ENCODE measurements at regions of chr6 and their contacts with region 1.

Region 1: GRCh38 chr6:135145063-135145800 is 35.9 kb upstream of the MYB start:
- DNase-seq: peak; percentile 24
- H3K4me3 ChIP-seq: no peak overlapping the region
- H3K27ac ChIP-seq: no peak overlapping the region
- H3K4me1 ChIP-seq: peaks cover 10% of the 10 kb centered on the region
- H3K27me3 ChIP-seq: no peaks in the 10 kb centered on the region
- CTCF ChIP-seq: peak; percentile 53 to 74

Region 2: GRCh38 chr6:135088818-135089809 is 56.1 kb before region 1 on chr6:
- CTCF ChIA-PET with region 1: no interaction called
- dilution Hi-C with region 1: no loop called
- in situ Hi-C with region 1: no loop called
- intact Hi-C with region 1: no loop called
- DNase-seq: peak; percentile 81
- H3K4me3 ChIP-seq: no peak overlapping the region
- H3K27ac ChIP-seq: no peak overlapping the region
- H3K4me1 ChIP-seq: peaks cover 7% of the 10 kb centered on the region
- H3K27me3 ChIP-seq: peaks cover 5% of the 10 kb centered on the region
- CTCF ChIP-seq: peak; percentile 40 to 56

Region 3: GRCh38 chr6:135257631-135258405 is 112.6 kb after region 1 on chr6:
- CTCF ChIA-PET with region 1: interaction called, 3 read pairs
- dilution Hi-C with region 1: no loop called
- in situ Hi-C with region 1: no loop called
- intact Hi-C with region 1: loop called (anchors 1 kb)
- DNase-seq: no peak
- H3K4me3 ChIP-seq: no peak overlapping the region
- H3K27ac ChIP-seq: no peak overlapping the region
- H3K4me1 ChIP-seq: no peaks in the 10 kb centered on the region
- H3K27me3 ChIP-seq: no peaks in the 10 kb centered on the region
- CTCF ChIP-seq: peak; percentile 11 to 43

Region 4: DNA sequence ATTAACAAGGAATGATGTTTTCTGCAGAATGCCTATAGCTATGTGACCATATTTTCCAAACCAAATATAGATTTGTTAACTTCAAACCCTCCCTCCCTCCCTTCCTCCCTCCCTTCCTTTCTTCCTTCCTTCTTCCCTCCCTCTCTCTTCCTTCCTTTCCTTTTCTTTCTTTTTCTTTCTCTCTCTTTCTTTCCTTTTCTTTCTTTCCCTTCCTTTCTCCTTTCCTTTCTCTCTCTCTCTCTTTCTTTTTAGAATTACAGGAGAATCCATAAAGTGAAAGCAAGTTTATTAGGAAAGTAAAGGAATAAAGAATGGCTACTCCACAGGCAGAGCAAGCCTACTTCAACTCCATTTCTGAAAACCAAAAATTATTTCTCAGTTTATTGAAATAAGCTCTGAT is 199.3 kb after region 1 on chr6:
- CTCF ChIA-PET with region 1: no interaction called
- dilution Hi-C with region 1: no loop called
- in situ Hi-C with region 1: no loop called
- intact Hi-C with region 1: no loop called
- DNase-seq: no peak
- H3K4me3 ChIP-seq: no peak overlapping the region
- H3K27ac ChIP-seq: no peak overlapping the region
- H3K4me1 ChIP-seq: no peaks in the 10 kb centered on the region
- H3K27me3 ChIP-seq: no peaks in the 10 kb centered on the region
- CTCF ChIP-seq: no peak

Region 5: DNA sequence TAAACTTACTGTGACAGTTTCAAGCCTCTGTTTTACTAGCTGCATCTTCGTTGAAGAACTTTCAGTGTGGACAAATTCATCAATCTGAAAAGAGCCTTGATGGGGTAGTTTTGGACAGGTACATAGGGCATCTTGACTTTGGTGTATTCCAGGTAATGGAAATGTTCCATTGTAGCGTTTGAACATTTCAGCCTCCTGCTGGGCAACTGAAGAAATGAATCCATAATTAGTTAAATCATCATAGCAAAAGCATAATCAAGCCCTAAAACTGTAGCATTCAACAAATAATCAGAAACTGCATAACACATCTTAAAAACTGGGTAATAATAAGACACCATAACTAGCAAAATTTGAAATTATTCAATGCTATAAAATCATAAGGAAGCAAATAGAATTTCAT is 266.1 kb after region 1 on chr6:
- CTCF ChIA-PET with region 1: no interaction called
- dilution Hi-C with region 1: no loop called
- in situ Hi-C with region 1: no loop called
- intact Hi-C with region 1: loop called (anchors 1 kb)
- DNase-seq: no peak
- H3K4me3 ChIP-seq: no peak overlapping the region
- H3K27ac ChIP-seq: no peak overlapping the region
- H3K4me1 ChIP-seq: no peaks in the 10 kb centered on the region
- H3K27me3 ChIP-seq: no peaks in the 10 kb centered on the region
- CTCF ChIP-seq: peak; percentile 9 to 44

Region 6: GRCh38 chr6:135423649-135424128 is 278.5 kb after region 1 on chr6:
- CTCF ChIA-PET with region 1: no interaction called
- dilution Hi-C with region 1: no loop called
- in situ Hi-C with region 1: loop called (anchors 10 kb)
- intact Hi-C with region 1: loop called (anchors 1 kb)
- DNase-seq: peak; percentile 14
- H3K4me3 ChIP-seq: no peak overlapping the region
- H3K27ac ChIP-seq: no peak overlapping the region
- H3K4me1 ChIP-seq: no peaks in the 10 kb centered on the region
- H3K27me3 ChIP-seq: no peaks in the 10 kb centered on the region
- CTCF ChIP-seq: peak; percentile 60 to 73